ENCODE measurements at regions of chr12 and their contacts with region 1.

Region 1: DNA sequence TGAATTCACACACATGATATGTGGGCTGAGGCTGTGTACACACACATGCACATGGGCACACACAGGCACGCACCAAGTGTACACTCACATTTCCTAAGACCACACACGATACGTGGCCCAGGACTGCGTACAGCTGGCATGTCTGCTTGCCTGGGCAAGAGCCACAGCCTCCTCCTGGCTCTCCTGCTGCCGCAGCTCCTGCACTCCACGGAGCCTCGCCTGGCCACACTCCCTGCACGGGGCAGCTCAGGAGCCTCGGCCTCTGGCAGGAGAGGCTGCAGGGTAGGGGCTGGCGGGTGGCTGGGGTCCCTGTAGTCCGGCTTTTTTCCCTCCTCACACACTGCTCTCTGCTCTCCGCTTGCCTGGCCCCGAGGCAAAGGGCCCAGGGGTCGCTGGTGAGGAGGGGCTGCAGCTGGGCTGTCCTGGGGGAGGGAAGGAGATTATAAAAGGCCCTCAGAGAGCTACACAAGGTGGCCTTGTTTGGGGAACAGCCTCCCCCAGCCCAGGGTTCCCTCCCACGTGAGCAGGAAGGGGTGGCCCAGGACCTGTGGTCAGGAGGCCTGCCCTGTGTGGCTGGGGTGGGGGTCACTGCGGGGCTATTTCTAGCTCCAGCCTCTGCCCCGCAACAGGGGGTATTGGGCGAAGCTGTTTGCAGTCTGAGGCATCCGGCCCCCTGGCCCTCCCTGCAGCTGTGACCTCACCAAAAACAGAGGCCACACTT is 89.0 kb upstream of the SFSWAP start:
- DNase-seq: no peak
- ATAC-seq: peak in 2 of 4 donors; percentile 4 to 30
- H3K4me3 ChIP-seq: no peak overlapping the region
- H3K27ac ChIP-seq: no peak overlapping the region
- H3K4me1 ChIP-seq: no peaks in the 10 kb centered on the region
- H3K27me3 ChIP-seq: peaks cover 0 to 34% (median 5%) of the 10 kb centered on the region in 3 donors
- CTCF ChIP-seq: no peak

Region 2: GRCh38 chr12:131345521-131346436 is 276.1 kb before region 1 on chr12:
- intact Hi-C with region 1: loop called in 1 of 2 experiments (anchors 5 kb)
- DNase-seq: no peak
- ATAC-seq: no peak
- H3K4me3 ChIP-seq: no peak overlapping the region
- H3K27ac ChIP-seq: no peak overlapping the region
- H3K4me1 ChIP-seq: no peaks in the 10 kb centered on the region
- H3K27me3 ChIP-seq: no peaks in the 10 kb centered on the region
- CTCF ChIP-seq: no peak

Measured in psoas muscle (tissue), 8 donors.